ENCODE measurements at regions of chr1 and their contacts with region 1.

Region 1: DNA sequence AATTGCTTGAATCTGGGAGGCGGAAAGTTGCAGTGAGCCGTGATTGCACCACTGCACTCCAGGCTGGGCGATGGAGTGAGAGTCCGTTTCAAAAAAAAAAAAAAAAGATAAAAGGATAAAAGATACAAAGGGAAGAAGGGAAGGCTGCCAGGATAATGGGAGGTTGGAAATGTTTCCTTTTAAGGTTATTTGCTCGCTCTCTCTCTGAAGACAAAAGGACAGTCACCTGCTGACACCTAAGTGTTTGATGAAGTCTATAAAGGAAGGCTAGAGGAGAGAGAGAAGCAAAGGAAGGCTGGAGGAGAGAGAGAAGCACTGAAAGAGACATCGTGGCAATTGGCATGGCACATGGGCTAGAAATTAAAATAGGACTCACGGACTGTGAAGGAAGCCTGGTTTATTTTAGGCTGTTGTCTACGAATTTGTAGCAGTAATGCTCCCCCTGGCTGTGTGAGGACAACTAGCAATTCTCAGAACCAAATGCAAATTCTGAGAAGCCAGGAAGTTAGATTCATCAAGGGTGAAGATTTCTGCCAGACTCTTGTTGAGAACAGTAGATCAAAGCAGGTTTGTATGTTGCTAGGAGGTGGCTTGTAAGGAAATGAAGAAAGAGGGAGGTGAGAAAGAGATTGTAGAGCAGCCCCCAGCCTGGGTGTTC is 154.2 kb downstream of the ZP4 start:
- DNase-seq: peak; percentile 22
- H3K4me3 ChIP-seq: no peak overlapping the region
- H3K27ac ChIP-seq: no peak overlapping the region
- H3K4me1 ChIP-seq: no peaks in the 10 kb centered on the region
- H3K27me3 ChIP-seq: no peaks in the 10 kb centered on the region
- CTCF ChIP-seq: peak; percentile 44

Region 2: GRCh38 chr1:237562242-237562823 is 174.2 kb before region 1 on chr1:
- CTCF ChIA-PET with region 1: interaction called, 13 read pairs
- POLR2A ChIA-PET with region 1: no interaction called
- intact Hi-C with region 1: no loop called
- DNase-seq: peak; percentile 71
- H3K4me3 ChIP-seq: no peak overlapping the region
- H3K27ac ChIP-seq: no peak overlapping the region
- H3K4me1 ChIP-seq: no peaks in the 10 kb centered on the region
- H3K27me3 ChIP-seq: no peaks in the 10 kb centered on the region
- CTCF ChIP-seq: peak; percentile 55

Region 3: DNA sequence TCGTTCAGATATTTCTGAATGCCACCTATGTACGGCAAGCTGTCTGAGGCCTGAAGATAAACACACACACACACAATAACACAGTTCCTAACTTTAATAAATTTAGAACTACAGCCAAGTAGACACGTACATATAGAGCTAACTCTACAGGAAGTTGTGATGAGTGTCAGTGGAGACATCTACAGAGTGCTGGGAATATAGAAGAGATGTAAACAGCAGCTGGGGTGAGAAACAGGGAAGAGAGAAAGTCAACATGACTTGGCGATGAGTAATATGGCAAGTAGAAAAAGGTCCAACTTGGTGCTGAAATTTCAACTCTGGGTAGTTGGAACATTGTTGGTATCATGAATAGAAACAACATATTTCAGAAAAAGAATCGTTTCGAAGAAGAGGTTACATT is 52.3 kb before region 1 on chr1:
- CTCF ChIA-PET with region 1: no interaction called
- POLR2A ChIA-PET with region 1: no interaction called
- intact Hi-C with region 1: loop called (anchors 5 kb)
- DNase-seq: no peak
- H3K4me3 ChIP-seq: no peak overlapping the region
- H3K27ac ChIP-seq: no peak overlapping the region
- H3K4me1 ChIP-seq: no peaks in the 10 kb centered on the region
- H3K27me3 ChIP-seq: no peaks in the 10 kb centered on the region
- CTCF ChIP-seq: no peak

Region 4: GRCh38 chr1:237814319-237814924 is 77.9 kb after region 1 on chr1:
- CTCF ChIA-PET with region 1: no interaction called
- POLR2A ChIA-PET with region 1: no interaction called
- intact Hi-C with region 1: no loop called
- DNase-seq: peak; percentile 40
- H3K4me3 ChIP-seq: no peak overlapping the region
- H3K27ac ChIP-seq: no peak overlapping the region
- H3K4me1 ChIP-seq: no peaks in the 10 kb centered on the region
- H3K27me3 ChIP-seq: no peaks in the 10 kb centered on the region
- CTCF ChIP-seq: peak; percentile 67

Region 5: DNA sequence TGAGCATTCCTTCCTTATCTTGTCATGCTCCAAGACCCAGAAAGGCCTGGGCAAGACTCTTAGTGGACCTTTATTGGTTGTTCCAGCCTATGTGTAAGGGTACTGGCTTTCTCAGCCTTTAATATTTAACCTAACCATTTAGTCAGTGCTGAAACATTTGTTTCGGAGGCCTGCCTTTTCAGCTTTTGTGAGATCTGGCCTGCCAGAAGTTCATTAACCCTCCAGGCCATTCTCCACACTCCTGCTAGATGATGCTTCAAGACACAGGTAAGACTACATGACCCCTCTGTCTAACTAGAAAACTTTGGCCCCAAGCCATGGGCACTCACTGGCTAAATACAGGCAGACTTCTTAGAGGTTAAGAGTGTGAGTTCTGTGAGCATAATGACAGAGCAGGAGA is 292.6 kb after region 1 on chr1:
- CTCF ChIA-PET with region 1: no interaction called
- POLR2A ChIA-PET with region 1: no interaction called
- intact Hi-C with region 1: no loop called
- DNase-seq: no peak
- H3K4me3 ChIP-seq: no peak overlapping the region
- H3K27ac ChIP-seq: no peak overlapping the region
- H3K4me1 ChIP-seq: no peaks in the 10 kb centered on the region
- H3K27me3 ChIP-seq: no peaks in the 10 kb centered on the region
- CTCF ChIP-seq: no peak

Measured in A673 (cell line).